Ascending aorta (tissue), 2 donors: ENCODE measurements at regions of chr11 and their contacts with region 1.

Region 1: DNA sequence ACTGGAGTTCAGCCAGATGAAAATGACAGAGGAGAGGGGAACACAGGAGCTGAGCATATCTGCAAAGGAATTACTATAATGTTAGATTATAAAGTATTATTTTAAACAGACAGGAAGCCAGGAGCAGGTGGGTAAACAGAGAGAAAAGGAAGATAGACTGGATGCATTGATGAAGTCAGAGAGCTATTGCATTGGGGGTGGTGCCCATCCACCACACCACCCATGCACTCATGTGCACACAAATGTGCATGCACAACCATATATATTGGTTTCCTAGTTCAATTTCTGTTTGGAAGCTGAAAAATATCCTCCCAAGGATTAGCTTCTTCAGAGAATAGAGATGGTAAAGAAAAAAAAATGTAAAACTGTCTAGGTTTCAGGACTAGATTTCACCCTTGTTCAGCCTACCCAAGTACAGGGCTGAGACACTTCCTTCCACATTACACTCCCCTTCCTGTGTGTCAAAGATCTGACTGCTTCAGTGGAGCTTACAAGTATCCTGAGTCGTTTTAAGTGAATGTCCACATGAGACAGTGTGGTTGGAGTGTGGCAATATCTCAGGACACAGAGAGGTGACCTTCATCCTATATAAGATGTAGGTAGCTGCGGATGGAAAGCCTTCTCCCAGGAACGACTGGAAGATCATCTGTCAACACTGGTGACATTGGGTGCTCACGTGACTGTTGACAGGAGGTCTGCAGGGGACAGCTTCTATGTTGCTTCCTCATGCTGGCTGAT is 12.2 kb upstream of the SMPD1 start:
- DNase-seq: no peak
- H3K4me3 ChIP-seq: no peak overlapping the region
- H3K27ac ChIP-seq: no peak overlapping the region
- H3K4me1 ChIP-seq: no peaks in the 10 kb centered on the region
- H3K27me3 ChIP-seq: no peaks in the 10 kb centered on the region
- CTCF ChIP-seq: no peak

Region 2: DNA sequence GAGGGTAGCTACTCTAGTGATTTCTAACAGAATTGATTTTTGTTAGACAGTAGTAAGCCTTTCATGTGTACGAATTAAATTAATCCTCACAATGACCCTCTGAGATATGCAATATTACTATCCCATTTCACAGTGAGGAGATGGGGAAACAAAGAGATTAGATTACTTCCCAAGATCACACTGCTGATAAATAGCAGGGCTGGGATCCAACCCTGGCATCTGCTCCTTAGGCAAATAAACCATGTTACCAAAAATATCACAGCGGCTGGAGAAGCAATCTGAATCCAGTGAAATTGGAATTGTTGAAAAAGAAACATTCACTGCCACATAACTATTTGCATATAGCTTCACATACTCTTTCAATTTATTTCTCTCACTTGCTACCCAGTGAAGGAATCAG is 45.0 kb before region 1 on chr11:
- intact Hi-C with region 1: no loop called
- DNase-seq: no peak
- H3K4me3 ChIP-seq: no peak overlapping the region
- H3K27ac ChIP-seq: peak overlapping the region; percentile 3 to 8
- H3K4me1 ChIP-seq: peaks cover 0 to 15% of the 10 kb centered on the region in 2 donors
- H3K27me3 ChIP-seq: no peaks in the 10 kb centered on the region
- CTCF ChIP-seq: no peak

Region 3: DNA sequence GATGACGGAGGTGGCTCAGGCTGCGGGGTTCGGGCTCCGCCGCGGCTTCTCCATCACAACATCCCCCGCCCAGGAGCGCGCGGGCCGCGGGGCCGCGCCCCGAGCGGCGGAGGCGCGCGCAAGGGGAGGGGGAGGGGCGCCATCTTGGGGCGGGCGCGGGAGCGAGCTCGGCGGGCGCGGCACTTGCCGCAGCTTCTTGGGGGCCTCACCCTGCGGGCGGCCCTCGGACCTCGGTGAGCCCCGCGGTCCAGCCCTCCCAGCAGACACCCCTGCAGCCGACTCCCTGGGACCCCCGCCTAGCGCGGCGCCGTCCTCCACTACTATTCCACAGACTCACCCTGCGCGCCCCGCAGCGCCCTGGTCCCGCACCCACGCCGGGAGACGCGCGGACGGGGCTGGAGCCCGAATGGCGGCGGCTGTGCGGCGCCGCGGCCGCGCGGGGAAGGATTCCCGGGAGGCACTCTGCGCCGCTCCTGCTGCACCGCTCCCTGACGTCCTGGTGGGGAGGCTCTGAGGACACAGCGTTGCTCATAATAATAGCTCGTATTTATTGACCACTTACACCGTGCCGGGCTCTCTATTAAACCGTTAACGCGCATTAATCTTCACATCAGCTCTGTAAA is 41.0 kb after region 1 on chr11 and contains the start of gene APBB1:
- intact Hi-C with region 1: loop called (anchors 5 kb)
- DNase-seq: peak in 1 of 2 donors; percentile 83
- H3K4me3 ChIP-seq: peak within 1 kb of the TSS; percentile 91 to 99
- H3K27ac ChIP-seq: peak within 1 kb of the TSS; percentile 90 to 92
- H3K4me1 ChIP-seq: peaks cover 0 to 22% of the 10 kb centered on the region in 2 donors
- H3K27me3 ChIP-seq: no peaks in the 10 kb centered on the region
- CTCF ChIP-seq: peak in 1 of 3 experiments; percentile 16
- total RNA-seq, gene APBB1: 29.2 TPM

Region 4: DNA sequence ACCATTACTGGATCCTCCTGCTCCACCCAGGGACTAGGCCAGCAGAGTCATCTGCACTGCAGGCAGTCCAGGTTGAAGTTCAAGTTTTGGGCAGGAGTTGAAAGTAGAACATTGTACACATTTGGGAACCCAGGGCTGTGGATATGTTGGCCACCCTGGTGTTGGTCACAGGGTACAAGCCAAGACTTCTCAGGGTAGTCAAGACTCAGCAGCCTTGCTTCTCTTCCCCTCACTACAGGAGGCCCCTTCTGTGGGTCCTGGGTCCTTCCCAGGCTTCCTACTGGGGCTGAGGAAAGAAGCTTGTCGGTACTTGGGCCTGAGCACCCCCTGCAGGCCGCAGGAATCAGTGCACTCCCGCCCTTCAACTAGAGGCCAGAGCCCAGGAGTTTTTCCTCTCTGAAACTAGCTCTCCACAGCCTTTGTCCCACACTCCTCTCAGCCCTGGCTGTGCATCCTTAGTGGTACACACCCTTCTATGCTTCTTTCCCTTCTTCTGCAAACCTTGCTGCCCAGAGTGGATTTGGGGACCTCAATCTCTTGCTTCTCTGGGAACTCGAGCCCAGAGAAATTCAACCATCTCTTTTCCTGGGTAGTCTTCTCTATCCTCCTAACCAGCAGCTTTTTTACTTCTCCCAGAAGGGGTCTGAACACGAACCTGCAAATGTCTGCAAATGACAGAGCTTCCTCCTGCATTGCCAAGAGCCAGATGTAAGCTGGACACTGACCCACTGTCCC is 65.4 kb after region 1 on chr11:
- intact Hi-C with region 1: loop called (anchors 1 kb)
- DNase-seq: no peak
- H3K4me3 ChIP-seq: no peak overlapping the region
- H3K27ac ChIP-seq: peak overlapping the region; percentile 47 to 64
- H3K4me1 ChIP-seq: peaks cover 0 to 3% of the 10 kb centered on the region in 2 donors
- H3K27me3 ChIP-seq: no peaks in the 10 kb centered on the region
- CTCF ChIP-seq: peak; percentile 55 to 69 (median 60)

Region 5: DNA sequence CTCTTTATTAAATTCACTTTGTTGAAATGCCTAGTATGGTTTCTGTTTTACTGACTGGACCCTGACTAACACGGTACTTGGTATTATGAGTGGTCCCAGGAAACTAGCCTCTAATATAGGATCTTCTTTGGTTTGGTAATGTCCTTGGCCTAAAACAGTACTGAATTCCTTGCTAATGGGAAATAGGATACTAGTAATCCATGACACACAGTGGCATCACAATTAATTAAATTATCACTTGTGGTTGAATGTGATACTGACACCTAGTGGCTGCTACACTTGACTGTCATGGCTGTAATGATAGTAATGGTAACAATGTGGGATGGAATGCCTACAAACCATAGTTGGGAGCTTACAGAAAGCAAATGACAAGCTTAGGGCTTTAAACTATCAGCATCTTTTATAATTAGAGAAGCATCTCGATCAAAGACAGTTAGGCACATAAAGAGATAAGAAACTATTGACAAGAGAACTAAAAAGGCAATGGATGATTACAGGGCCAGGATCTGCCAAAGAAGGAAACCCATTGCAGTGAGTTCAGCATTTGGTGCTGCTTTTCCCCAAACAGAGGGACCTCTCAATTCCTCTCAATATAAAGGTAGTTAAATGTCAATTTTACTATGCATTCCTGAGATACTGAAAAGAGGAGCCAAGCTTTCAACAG is 127.6 kb after region 1 on chr11:
- intact Hi-C with region 1: loop called (anchors 2 kb)
- DNase-seq: no peak
- H3K4me3 ChIP-seq: no peak overlapping the region
- H3K27ac ChIP-seq: peak overlapping the region in 1 of 2 donors; percentile 15
- H3K4me1 ChIP-seq: no peaks in the 10 kb centered on the region
- H3K27me3 ChIP-seq: no peaks in the 10 kb centered on the region
- CTCF ChIP-seq: peak; percentile 55 to 70 (median 62)

Region 6: DNA sequence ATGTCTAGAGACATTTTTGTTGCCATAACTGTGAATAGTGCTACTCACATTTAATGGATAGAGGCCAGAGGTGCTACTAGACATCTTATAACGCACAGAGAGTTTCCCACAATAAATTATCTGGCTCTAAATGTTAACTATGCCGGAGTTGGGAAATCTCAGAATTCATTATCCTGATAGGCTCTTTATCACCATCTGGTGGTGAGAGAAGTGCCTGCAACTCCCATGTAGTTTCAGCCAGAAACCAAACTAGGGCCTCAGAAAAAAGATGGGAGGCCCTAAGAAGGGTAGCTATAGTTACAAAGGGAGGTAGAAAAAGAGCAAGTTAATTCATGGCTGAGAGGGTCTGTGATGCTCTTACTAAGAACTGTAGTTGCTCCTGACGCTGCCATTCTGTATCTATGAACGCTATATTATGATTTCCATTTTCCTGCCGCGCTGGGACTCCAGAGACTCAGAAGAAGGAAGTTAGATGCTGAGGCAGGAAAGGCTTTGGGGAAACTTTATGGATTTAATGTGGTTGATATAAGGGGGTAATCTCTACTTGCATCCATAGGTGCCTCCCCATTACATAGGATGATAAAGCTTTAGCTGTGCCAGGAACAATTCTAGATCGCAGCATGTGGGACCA is 327.9 kb after region 1 on chr11:
- intact Hi-C with region 1: loop called (anchors 2 kb)
- DNase-seq: peak in 1 of 2 donors; percentile 75
- H3K4me3 ChIP-seq: no peak overlapping the region
- H3K27ac ChIP-seq: no peak overlapping the region
- H3K4me1 ChIP-seq: no peaks in the 10 kb centered on the region
- H3K27me3 ChIP-seq: no peaks in the 10 kb centered on the region
- CTCF ChIP-seq: peak; percentile 81 to 92 (median 88)